PC-9 (cell line): ENCODE measurements at regions of chr5 and their contacts with region 1.

Region 1: GRCh38 chr5:106860398-106861044 is 810.2 kb downstream of the EFNA5 start:
- DNase-seq: no peak
- H3K4me3 ChIP-seq: no peak overlapping the region
- H3K27ac ChIP-seq: no peak overlapping the region
- H3K4me1 ChIP-seq: no peaks in the 10 kb centered on the region
- H3K27me3 ChIP-seq: no peaks in the 10 kb centered on the region
- CTCF ChIP-seq: no peak

Region 2: DNA sequence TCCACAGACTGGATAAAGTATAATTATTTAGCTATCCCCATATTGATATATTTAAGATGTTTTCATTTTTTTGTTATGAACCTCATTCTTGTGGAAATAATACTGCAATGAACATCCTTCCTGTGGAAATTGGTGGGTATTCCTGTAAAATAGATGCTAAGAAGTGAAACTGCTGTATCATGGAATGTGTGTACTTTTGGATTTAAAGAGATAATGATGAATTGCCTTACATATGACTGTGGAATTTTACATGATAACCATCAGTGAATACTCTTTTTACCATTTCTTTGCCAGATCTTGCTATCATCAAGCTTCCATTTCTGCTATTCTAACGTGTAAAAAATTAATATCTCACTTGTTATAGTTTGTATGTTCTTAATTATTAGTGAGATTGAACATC is 37.7 kb before region 1 on chr5:
- CTCF ChIA-PET with region 1: no interaction called
- POLR2A ChIA-PET with region 1: no interaction called
- intact Hi-C with region 1: no loop called
- DNase-seq: no peak
- H3K4me3 ChIP-seq: no peak overlapping the region
- H3K27ac ChIP-seq: no peak overlapping the region
- H3K4me1 ChIP-seq: no peaks in the 10 kb centered on the region
- H3K27me3 ChIP-seq: no peaks in the 10 kb centered on the region
- CTCF ChIP-seq: no peak

Region 3: GRCh38 chr5:106833517-106833916 is 27.0 kb before region 1 on chr5:
- CTCF ChIA-PET with region 1: interaction called, 11 read pairs
- POLR2A ChIA-PET with region 1: no interaction called
- intact Hi-C with region 1: no loop called
- DNase-seq: no peak
- H3K4me3 ChIP-seq: no peak overlapping the region
- H3K27ac ChIP-seq: no peak overlapping the region
- H3K4me1 ChIP-seq: no peaks in the 10 kb centered on the region
- H3K27me3 ChIP-seq: no peaks in the 10 kb centered on the region
- CTCF ChIP-seq: no peak